Activated CD8-positive, alpha-beta T cell treated with anti-CD3 and anti-CD28 coated beads, Interleukin-2, amount 10 ng/mL, durations not matched to agents 7 days and 5 days (primary cell): ENCODE measurements at regions of chr11 and their contacts with region 1.

Region 1: DNA sequence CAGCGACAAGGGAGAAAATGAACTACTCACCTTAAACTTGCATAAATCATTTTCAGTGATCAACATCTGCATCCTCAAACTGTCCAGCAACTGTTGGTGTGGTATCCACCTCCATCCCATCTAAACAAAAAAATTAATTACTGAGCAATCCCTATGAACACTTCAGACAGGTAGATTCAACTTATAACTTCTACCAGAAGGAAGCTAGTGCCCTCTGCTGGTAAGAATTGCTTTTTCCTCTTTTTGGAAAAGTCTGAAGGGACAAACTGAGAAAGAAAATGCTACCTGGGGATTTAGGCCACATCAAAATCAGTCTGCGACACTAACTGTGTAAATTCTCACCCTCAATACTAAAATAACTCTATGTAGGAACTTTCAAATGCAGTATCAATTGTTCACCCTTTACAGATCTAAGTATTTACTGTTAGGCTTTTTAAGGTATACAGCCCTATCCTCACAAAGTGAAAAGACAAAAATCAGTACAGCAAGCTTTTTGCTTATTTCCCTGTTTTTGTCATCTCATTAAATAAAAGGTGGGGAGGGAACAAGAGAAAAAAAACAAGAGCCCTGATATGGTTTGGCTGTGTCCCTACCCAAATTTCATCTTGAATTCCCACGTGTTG is 17.9 kb downstream of the CLNS1A start:
- DNase-seq: peak; percentile 46
- ATAC-seq: no peak
- H3K4me3 Mint-ChIP-seq: no peak overlapping the region
- H3K27ac Mint-ChIP-seq: no peak overlapping the region
- H3K4me1 Mint-ChIP-seq: no peaks in the 10 kb centered on the region
- H3K27me3 Mint-ChIP-seq: no peaks in the 10 kb centered on the region

Region 2: GRCh38 chr11:77424644-77425043 is 195.0 kb before region 1 on chr11:
- CTCF ChIA-PET with region 1: no interaction called
- POLR2A ChIA-PET with region 1: no interaction called
- DNase-seq: no peak
- ATAC-seq: no peak
- H3K4me3 Mint-ChIP-seq: no peak overlapping the region
- H3K27ac Mint-ChIP-seq: no peak overlapping the region
- H3K4me1 Mint-ChIP-seq: peaks cover 4% of the 10 kb centered on the region
- H3K27me3 Mint-ChIP-seq: peaks cover 3% of the 10 kb centered on the region

Region 3: GRCh38 chr11:77602381-77603088 is 17.2 kb before region 1 on chr11:
- CTCF ChIA-PET with region 1: interaction called, 25 read pairs
- POLR2A ChIA-PET with region 1: interaction called, 3 read pairs
- DNase-seq: no peak
- ATAC-seq: no peak
- H3K4me3 Mint-ChIP-seq: no peak overlapping the region
- H3K27ac Mint-ChIP-seq: no peak overlapping the region
- H3K4me1 Mint-ChIP-seq: no peaks in the 10 kb centered on the region
- H3K27me3 Mint-ChIP-seq: no peaks in the 10 kb centered on the region

Region 4: DNA sequence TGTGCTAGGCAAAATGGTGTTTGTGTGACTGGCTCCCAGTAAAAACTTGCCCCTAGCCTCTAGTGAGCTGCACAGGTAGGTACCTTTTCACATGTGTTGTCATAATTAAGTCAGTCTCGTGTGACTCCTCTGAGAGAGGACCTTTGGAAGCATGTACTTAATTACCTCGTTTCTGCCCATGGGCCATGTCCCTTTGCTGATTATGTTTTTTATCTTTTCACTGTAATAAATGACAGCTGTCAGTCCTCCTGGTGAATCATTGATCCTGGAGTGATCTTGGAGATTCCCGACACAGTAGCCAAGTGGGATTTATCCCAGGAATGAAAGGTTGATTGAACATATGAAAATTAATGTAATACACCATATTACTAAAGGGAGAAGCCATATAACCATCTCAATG is 30.4 kb after region 1 on chr11:
- CTCF ChIA-PET with region 1: no interaction called
- POLR2A ChIA-PET with region 1: no interaction called
- DNase-seq: no peak
- ATAC-seq: no peak
- H3K4me3 Mint-ChIP-seq: no peak overlapping the region
- H3K27ac Mint-ChIP-seq: no peak overlapping the region
- H3K4me1 Mint-ChIP-seq: no peaks in the 10 kb centered on the region
- H3K27me3 Mint-ChIP-seq: peaks cover 6% of the 10 kb centered on the region